ENCODE measurements at regions of chr1 and their contacts with region 1.

Region 1: DNA sequence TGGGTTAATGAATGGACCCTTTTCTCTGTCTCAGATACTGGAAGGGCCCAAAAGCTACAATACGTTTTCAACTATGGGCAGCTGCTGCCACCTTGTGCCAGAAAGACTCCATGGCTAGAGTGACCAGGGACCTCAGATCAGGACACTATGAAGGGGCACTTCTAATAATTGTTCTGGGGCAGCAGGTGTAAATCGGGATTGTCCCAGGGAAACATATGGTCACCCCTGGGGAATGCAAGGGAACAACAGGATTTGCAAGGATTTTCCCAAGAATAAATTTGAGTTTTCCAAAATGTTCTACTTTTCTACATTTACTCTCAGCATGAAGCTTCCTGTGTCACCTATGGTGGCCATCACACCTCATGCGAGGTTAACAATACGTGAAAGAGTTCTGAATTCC is 12.0 kb upstream of the FCAMR start:
- DNase-seq: peak; percentile 70
- H3K4me3 Mint-ChIP-seq: no peak overlapping the region
- H3K27ac Mint-ChIP-seq: no peak overlapping the region
- H3K4me1 Mint-ChIP-seq: no peaks in the 10 kb centered on the region
- H3K27me3 Mint-ChIP-seq: peaks cover 47% of the 10 kb centered on the region

Region 2: DNA sequence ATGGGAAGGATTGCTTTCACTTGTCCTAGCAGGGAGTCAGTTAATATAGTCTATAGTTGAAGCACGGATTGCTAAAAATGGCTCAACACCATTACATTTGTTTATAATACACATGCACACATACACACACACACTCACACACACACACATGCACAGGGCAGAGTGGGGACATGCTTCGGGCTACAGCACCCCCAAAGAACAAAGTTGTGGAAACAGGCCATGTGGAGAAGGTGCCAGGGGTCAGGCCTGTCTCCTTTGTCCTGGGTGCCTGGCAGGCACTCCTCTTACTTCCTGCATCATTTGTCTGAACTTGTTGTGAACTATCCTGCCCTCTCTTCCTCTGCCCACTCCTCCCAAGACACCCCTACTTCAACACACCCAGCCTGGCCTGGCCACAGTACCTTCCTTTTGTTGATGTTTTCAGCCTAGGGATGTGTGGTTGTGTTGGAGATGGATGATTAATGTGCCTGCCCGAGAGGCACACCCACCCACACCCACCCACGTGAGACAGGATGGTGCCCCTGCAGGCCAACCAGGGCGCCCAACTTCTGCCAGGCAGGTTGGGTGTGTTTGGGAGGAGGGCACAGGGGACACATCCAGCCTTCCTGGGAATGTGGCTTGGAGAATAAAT is 457.4 kb before region 1 on chr1:
- CTCF ChIA-PET with region 1: no interaction called
- POLR2A ChIA-PET with region 1: no interaction called
- DNase-seq: peak; percentile 27
- H3K4me3 Mint-ChIP-seq: no peak overlapping the region
- H3K27ac Mint-ChIP-seq: no peak overlapping the region
- H3K4me1 Mint-ChIP-seq: peaks cover 5% of the 10 kb centered on the region
- H3K27me3 Mint-ChIP-seq: no peaks in the 10 kb centered on the region

Region 3: GRCh38 chr1:206935491-206936067 is 46.6 kb before region 1 on chr1:
- CTCF ChIA-PET with region 1: interaction called, 88 read pairs
- POLR2A ChIA-PET with region 1: no interaction called
- DNase-seq: peak; percentile 54
- H3K4me3 Mint-ChIP-seq: no peak overlapping the region
- H3K27ac Mint-ChIP-seq: no peak overlapping the region
- H3K4me1 Mint-ChIP-seq: peaks cover 8% of the 10 kb centered on the region
- H3K27me3 Mint-ChIP-seq: no peaks in the 10 kb centered on the region

Region 4: DNA sequence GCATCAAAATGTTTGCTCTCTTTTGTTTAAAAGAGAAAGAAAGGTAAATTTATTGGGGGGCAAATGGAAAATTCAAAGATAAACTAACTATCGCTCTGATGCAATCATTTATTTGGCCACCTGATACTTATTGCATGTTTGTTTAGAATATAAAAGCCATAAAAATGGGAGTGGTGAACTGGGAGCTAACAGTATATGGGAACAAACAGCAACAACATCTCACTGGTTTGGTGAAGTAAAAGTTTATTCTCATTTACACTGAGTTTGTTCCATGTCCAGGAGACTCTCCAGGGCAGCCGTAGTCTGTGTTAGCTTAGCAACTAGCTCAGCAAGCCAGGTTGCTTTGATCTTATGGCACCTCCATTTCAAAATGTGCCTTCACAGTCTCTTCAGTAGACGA is 142.2 kb after region 1 on chr1:
- CTCF ChIA-PET with region 1: no interaction called
- POLR2A ChIA-PET with region 1: no interaction called
- DNase-seq: no peak
- H3K4me3 Mint-ChIP-seq: no peak overlapping the region
- H3K27ac Mint-ChIP-seq: no peak overlapping the region
- H3K4me1 Mint-ChIP-seq: no peaks in the 10 kb centered on the region
- H3K27me3 Mint-ChIP-seq: peaks cover 17% of the 10 kb centered on the region

Measured in activated CD4-positive, alpha-beta memory T cell treated with anti-CD3 and anti-CD28 coated beads, Interleukin-2, amount 10 ng/mL, durations not matched to agents 7 days and 5 days (primary cell).